CD4-positive, alpha-beta T cell (primary cell): ENCODE measurements at regions of chr17 and their contacts with region 1.

Region 1: DNA sequence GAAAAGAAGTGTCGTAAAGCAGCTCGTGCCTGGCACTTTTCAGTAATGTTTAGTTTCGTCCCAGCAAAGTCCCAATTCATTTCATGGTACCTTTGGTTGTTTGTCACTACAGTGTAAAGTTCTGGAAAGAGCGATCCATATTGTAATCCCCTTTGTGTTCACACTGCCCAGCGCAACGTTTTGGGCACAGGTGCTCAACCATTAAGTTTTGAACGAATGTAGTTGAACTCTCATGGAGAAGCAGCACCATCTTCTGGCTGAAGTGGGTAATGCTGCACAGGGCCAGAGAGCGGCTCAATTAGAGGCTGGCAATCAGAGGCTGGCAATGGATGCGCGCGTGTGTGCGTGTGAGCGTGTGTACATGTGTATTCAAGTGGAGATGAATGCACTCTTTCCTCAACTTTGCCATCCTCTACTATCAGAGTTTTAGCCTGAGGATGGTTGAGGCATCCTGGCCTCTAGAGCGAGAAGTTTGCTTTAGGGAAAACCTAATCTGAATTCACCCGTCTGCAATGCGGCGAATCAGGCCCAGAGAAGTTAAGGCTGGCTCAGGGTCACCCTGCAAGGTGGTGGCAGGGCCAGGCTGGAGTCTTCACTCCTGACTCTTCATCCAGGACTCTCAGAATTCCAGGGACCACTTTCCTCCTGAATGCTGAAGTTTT is 29.9 kb downstream of the DYNLL2 start:
- DNase-seq: peak; percentile 73 to 89 (median 86)
- ATAC-seq: peak; percentile 99
- H3K4me3 ChIP-seq: no peak overlapping the region
- H3K4me3 Mint-ChIP-seq: no peak overlapping the region
- H3K27ac ChIP-seq: no peak overlapping the region
- H3K27ac Mint-ChIP-seq: no peak overlapping the region
- H3K4me1 ChIP-seq: no peaks in the 10 kb centered on the region
- H3K4me1 Mint-ChIP-seq: no peaks in the 10 kb centered on the region
- H3K27me3 ChIP-seq: no peaks in the 10 kb centered on the region
- H3K27me3 Mint-ChIP-seq: peaks cover 4% of the 10 kb centered on the region
- CTCF ChIP-seq: peak; percentile 89

Region 2: DNA sequence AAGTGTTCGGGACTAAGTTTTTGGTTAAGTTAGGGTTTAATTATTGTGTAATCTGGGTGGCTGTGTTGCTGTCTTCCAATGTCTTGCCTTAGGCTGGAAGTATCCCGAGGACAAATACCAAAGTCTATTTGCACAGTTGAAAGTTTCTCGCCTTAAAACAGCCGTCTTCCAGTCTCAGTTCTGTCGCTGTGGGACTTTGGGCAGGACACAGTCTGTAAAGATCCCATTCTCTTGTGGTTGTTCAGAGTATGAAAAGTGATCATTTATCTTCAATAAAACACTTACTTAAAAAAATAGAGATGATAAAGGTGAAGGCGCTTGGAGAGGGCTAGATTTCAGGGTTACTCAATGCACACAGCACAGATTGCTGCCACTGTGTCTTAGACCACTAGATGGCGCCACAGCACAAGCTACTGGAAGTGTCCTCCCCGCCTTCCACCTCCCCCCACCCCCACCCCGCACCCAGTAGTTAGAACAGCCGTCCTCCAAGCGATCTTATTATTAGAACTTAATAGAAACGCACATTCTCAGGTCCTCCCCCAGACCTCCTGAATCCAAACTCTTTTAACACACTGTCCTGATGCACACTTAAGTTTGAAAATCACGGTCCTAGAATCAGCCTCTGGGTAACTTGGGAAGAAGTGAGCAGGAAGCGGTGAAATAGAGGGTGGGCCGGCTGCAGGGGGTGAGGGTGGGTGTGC is 982.2 kb before region 1 on chr17:
- CTCF ChIA-PET with region 1: no interaction called
- POLR2A ChIA-PET with region 1: no interaction called
- intact Hi-C with region 1: loop called (anchors 1 to 2 kb)
- DNase-seq: peak; percentile 72 to 91 (median 80)
- ATAC-seq: peak; percentile 97
- H3K4me3 ChIP-seq: no peak overlapping the region
- H3K4me3 Mint-ChIP-seq: no peak overlapping the region
- H3K27ac ChIP-seq: no peak overlapping the region
- H3K27ac Mint-ChIP-seq: no peak overlapping the region
- H3K4me1 ChIP-seq: peaks cover 4% of the 10 kb centered on the region
- H3K4me1 Mint-ChIP-seq: peaks cover 11% of the 10 kb centered on the region
- H3K27me3 ChIP-seq: no peaks in the 10 kb centered on the region
- H3K27me3 Mint-ChIP-seq: no peaks in the 10 kb centered on the region
- CTCF ChIP-seq: peak; percentile 77

Region 3: DNA sequence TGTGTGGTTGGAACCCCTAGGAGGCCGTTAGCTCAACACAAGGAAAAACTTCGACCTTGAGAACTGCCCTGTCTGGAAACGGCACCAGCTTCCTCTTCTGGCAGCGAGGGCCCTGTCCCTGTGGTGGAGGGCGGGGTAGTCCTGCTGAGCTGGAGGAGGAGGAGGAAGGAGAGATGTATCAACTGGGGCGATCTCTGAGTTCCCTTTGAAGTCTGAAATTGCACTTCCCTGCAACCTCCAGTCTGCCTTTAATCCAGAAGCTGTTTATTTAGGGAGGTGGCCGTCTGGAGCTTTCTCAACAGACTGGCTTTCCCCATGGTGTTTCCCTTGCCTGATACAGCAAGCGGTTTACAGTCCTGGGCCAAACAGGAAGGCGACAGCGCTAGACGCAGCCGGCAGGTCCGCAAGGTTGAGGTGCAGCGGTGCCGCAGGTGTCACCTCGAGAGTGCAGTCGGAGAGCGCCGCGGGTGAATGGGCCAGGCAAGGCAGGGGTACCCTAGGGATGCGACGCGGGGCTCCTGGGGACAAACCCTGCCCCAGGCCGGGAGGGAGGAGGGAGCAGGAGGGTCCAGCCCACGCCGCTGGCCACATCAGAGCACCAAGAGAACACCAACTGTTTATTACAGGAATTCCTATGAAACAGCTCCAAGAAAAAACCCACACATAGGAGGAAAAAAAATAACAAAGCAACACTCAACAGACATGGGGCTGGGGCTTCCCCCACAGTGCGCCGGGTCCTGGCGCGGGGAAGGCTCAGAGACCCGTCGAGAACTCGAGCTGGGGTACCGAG is 251.9 kb before region 1 on chr17:
- CTCF ChIA-PET with region 1: interaction called, 5 read pairs
- POLR2A ChIA-PET with region 1: no interaction called
- intact Hi-C with region 1: loop called (anchors 1 kb)
- DNase-seq: peak in 12 of 14 experiments; percentile 19 to 75 (median 42)
- ATAC-seq: peak; percentile 74
- H3K4me3 ChIP-seq: peak overlapping the region; percentile 52
- H3K4me3 Mint-ChIP-seq: peak overlapping the region; percentile 89
- H3K27ac ChIP-seq: no peak overlapping the region
- H3K27ac Mint-ChIP-seq: no peak overlapping the region
- H3K4me1 ChIP-seq: peaks cover 21% of the 10 kb centered on the region
- H3K4me1 Mint-ChIP-seq: peaks cover 10% of the 10 kb centered on the region
- H3K27me3 ChIP-seq: peaks cover 10 to 14% of the 10 kb centered on the region in 2 experiments
- H3K27me3 Mint-ChIP-seq: peaks cover 14% of the 10 kb centered on the region
- CTCF ChIP-seq: no peak

Region 4: GRCh38 chr17:57892146-57892828 is 220.8 kb before region 1 on chr17:
- CTCF ChIA-PET with region 1: interaction called, 18 read pairs
- POLR2A ChIA-PET with region 1: interaction called, 3 read pairs
- intact Hi-C with region 1: loop called (anchors 1 to 2 kb)
- DNase-seq: peak; percentile 57 to 85 (median 75)
- ATAC-seq: peak; percentile 94
- H3K4me3 ChIP-seq: no peak overlapping the region
- H3K4me3 Mint-ChIP-seq: no peak overlapping the region
- H3K27ac ChIP-seq: no peak overlapping the region
- H3K27ac Mint-ChIP-seq: no peak overlapping the region
- H3K4me1 ChIP-seq: peaks cover 11% of the 10 kb centered on the region
- H3K4me1 Mint-ChIP-seq: peaks cover 6% of the 10 kb centered on the region
- H3K27me3 ChIP-seq: peaks cover 0 to 2% of the 10 kb centered on the region in 2 experiments
- H3K27me3 Mint-ChIP-seq: peaks cover 6% of the 10 kb centered on the region
- CTCF ChIP-seq: peak; percentile 90

Region 5: DNA sequence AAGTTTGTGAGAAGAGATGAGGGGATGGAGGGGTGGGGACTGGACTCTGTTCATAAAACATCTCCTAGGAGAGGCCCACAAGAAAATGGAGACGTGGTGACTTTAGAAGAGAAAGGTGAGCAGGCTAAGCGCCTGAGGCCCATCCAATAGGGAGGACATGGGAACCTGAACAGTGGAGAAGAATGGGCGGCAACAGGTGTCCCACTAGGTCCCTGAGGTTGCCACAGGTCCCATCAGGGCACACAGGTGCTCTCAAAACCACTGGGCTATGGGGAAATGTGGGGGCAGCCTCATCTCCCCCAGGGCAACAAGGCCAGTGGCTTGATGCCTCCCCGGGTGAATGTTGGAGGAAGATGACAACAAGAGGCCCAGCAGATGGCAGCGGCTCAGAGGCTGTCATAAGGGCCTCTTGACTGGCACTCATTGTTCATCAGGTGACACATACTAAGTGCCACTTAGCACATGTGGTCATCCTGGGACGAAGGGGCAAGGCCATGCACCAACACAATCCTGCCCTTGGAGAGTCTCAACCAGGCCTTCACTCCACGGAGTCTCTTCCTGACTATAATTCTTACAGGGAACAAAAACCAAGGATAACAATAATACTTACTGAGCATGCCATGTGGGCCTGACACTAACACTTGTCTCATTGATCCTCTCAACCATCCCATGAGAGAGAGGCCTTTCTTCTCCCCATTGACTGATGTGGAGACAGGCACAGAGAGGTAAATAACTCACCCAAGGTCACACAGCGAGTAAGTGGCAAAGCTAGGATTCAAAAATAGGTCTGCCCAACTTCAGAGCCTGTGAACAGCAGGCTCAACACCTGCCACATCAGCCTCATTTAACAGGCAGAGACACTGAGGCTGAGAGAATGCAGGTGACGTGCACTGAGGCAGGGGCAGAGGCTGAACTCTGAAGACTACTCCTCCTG is 195.9 kb before region 1 on chr17:
- CTCF ChIA-PET with region 1: no interaction called
- POLR2A ChIA-PET with region 1: no interaction called
- intact Hi-C with region 1: loop called in 1 of 2 experiments (anchors 1 kb)
- DNase-seq: peak in 11 of 14 experiments; percentile 10 to 68 (median 24)
- ATAC-seq: no peak
- H3K4me3 ChIP-seq: no peak overlapping the region
- H3K4me3 Mint-ChIP-seq: no peak overlapping the region
- H3K27ac ChIP-seq: no peak overlapping the region
- H3K27ac Mint-ChIP-seq: no peak overlapping the region
- H3K4me1 ChIP-seq: no peaks in the 10 kb centered on the region
- H3K4me1 Mint-ChIP-seq: no peaks in the 10 kb centered on the region
- H3K27me3 ChIP-seq: no peaks in the 10 kb centered on the region
- H3K27me3 Mint-ChIP-seq: no peaks in the 10 kb centered on the region
- CTCF ChIP-seq: no peak

Region 6: GRCh38 chr17:58082870-58083490 is 30.1 kb before region 1 on chr17 and contains the start of gene DYNLL2:
- CTCF ChIA-PET with region 1: no interaction called
- POLR2A ChIA-PET with region 1: no interaction called
- intact Hi-C with region 1: loop called in 1 of 2 experiments (anchors 1 kb)
- DNase-seq: peak; percentile 81 to 94 (median 90)
- ATAC-seq: peak; percentile 78
- H3K4me3 ChIP-seq: peak within 1 kb of the TSS; percentile 71
- H3K4me3 Mint-ChIP-seq: peak within 1 kb of the TSS; percentile 91
- H3K27ac ChIP-seq: peak within 1 kb of the TSS; percentile 63 to 69
- H3K27ac Mint-ChIP-seq: peak within 1 kb of the TSS; percentile 89
- H3K4me1 ChIP-seq: peaks cover 38% of the 10 kb centered on the region
- H3K4me1 Mint-ChIP-seq: peaks cover 36% of the 10 kb centered on the region
- H3K27me3 ChIP-seq: no peaks in the 10 kb centered on the region
- H3K27me3 Mint-ChIP-seq: no peaks in the 10 kb centered on the region
- CTCF ChIP-seq: no peak
- total RNA-seq, gene DYNLL2: 30.9 to 32.2 TPM

Region 7: DNA sequence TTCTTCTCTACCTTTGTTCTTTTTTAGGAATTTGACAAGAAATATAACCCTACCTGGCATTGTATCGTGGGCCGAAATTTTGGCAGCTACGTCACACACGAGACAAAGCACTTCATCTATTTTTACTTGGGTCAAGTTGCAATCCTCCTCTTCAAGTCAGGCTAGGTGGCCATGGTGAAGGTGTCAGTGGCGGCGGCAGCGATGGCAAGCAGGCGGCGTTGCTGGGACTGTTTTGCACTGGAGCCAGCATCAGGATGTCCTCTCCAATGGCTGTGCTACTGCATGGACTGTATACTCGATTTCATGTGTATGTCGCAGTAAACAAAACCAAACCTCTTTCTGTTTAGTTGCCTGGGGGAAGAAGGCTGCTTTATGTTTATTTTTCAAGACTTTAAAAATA is 24.0 kb before region 1 on chr17:
- CTCF ChIA-PET with region 1: no interaction called
- POLR2A ChIA-PET with region 1: no interaction called
- intact Hi-C with region 1: loop called in 1 of 2 experiments (anchors 1 kb)
- DNase-seq: no peak
- ATAC-seq: no peak
- H3K4me3 ChIP-seq: no peak overlapping the region
- H3K4me3 Mint-ChIP-seq: no peak overlapping the region
- H3K27ac ChIP-seq: no peak overlapping the region
- H3K27ac Mint-ChIP-seq: peak overlapping the region; percentile 62
- H3K4me1 ChIP-seq: peaks cover 48% of the 10 kb centered on the region
- H3K4me1 Mint-ChIP-seq: peaks cover 61% of the 10 kb centered on the region
- H3K27me3 ChIP-seq: no peaks in the 10 kb centered on the region
- H3K27me3 Mint-ChIP-seq: no peaks in the 10 kb centered on the region
- CTCF ChIP-seq: no peak